Colonic mucosa (tissue), 4 donors: ENCODE measurements at regions of chr12 and their contacts with region 1.

Region 1: DNA sequence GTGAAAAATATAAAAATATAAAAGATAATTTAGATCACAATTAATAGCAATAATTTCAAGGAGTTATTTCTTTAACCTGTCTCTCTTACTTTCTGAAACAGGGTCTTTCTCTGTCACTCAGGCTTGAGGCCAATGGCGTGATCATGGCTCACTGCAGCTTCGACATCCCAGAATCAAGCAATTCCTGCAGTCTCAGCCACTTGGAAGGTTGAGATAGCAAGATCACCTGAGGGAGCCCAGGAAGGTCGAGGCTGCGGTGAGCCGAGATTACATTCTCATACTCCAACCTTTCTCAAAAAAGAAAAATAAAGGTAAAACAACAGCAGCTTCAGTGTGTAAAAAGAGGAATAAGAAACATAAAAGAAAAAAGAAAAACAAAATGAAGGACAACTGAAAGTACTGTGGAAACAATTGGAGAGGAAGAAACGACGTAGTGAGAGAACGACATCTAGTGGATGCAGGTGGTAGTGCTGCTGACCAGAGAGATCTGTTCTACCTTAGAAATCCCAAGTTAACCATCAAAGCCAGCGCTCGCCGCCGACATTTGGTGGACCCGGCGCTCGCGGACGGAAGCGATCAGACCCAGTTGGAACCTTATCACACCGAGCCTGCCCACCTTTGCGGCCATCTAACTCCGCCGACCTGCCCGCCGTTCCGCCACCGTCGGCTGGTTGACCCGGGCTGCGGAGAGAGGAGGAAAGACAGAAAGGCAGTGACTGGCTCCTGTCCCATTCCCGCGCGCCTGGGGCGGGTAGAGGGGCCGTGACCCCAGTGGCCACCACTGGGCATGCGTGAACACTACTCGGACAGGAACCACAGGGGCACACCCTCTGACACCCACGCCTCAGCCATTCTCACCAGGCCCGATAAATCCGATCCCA is 196.1 kb downstream of the ALG10 start:
- DNase-seq: peak; percentile 61
- H3K4me3 ChIP-seq: peak overlapping the region; percentile 26
- H3K27ac ChIP-seq: no peak overlapping the region
- H3K4me1 ChIP-seq: no peaks in the 10 kb centered on the region
- H3K27me3 ChIP-seq: no peaks in the 10 kb centered on the region
- CTCF ChIP-seq: peak; percentile 88

Region 2: GRCh38 chr12:34121360-34121759 is 97.0 kb before region 1 on chr12:
- intact Hi-C with region 1: loop called (anchors 5 kb)
- DNase-seq: no peak
- H3K4me3 ChIP-seq: no peak overlapping the region
- H3K27ac ChIP-seq: no peak overlapping the region
- H3K4me1 ChIP-seq: no peaks in the 10 kb centered on the region
- H3K27me3 ChIP-seq: no peaks in the 10 kb centered on the region
- CTCF ChIP-seq: no peak